Ovary (tissue), 10 donors: ENCODE measurements at regions of chr6 and their contacts with region 1.

Region 1: GRCh38 chr6:73515204-73515655 is 5.6 kb downstream of the EEF1A1 start:
- DNase-seq: no peak
- H3K4me3 ChIP-seq: no peak overlapping the region
- H3K27ac ChIP-seq: no peak overlapping the region
- H3K4me1 ChIP-seq: peaks cover 1% of the 10 kb centered on the region
- H3K27me3 ChIP-seq: no peaks in the 10 kb centered on the region
- CTCF ChIP-seq: no peak
- EP300 ChIP-seq: no peak
- POLR2A ChIP-seq: no peak

Region 2: GRCh38 chr6:73418081-73418741 is 97.0 kb before region 1 on chr6:
- intact Hi-C with region 1: no loop called
- DNase-seq: no peak
- H3K4me3 ChIP-seq: no peak overlapping the region
- H3K27ac ChIP-seq: no peak overlapping the region
- H3K4me1 ChIP-seq: no peaks in the 10 kb centered on the region
- H3K27me3 ChIP-seq: no peaks in the 10 kb centered on the region
- CTCF ChIP-seq: no peak
- EP300 ChIP-seq: no peak
- POLR2A ChIP-seq: no peak

Region 3: GRCh38 chr6:73610444-73611275 is 95.4 kb after region 1 on chr6:
- intact Hi-C with region 1: loop called (anchors 2 to 5 kb)
- DNase-seq: no peak
- H3K4me3 ChIP-seq: no peak overlapping the region
- H3K27ac ChIP-seq: no peak overlapping the region
- H3K4me1 ChIP-seq: no peaks in the 10 kb centered on the region
- H3K27me3 ChIP-seq: no peaks in the 10 kb centered on the region
- CTCF ChIP-seq: peak in 2 of 3 donors; percentile 39 to 64
- EP300 ChIP-seq: no peak
- POLR2A ChIP-seq: no peak